ENCODE measurements at regions of chr21 and their contacts with region 1.

Region 1: DNA sequence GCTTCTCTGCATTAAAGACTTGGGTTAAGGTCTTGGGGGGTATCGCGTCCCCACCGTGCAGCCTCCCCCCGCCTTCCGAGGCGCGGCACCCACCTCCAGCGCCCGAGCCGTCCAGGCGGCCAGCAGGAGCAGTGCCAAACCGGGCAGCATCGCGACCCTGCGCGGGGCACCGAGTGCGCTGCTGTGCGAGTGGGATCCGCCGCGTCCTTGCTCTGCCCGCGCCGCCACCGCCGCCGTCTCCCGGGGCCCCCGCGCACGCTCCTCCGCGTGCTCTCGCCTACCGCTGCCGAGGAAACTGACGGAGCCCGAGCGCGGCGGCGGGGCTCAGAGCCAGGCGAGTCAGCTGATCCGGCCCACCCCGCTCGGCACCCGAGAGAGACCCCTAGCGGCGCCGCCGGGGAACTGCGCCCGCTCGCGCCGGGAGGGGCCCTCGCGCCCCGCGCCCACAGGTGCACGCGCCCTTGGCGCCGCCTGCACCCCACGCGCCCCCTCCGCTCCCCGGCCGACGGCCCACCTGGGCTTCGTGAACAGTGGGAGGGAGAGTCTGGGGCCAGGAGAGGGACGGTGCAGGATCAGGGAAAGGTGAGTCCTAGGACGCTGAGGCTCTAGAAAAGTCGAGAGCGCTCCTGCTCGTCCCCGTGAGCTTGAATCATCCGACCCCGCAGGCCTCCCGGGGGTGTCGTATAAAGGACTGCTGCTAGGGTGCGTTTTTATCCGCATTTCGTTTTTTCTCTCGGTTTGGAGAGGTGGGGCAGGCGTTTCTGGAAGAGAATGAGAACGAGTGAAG is at the start of gene APP:
- DNase-seq: peak; percentile 83
- ATAC-seq: peak; percentile 41
- H3K4me3 ChIP-seq: peak within 1 kb of the TSS; percentile 82
- H3K27ac ChIP-seq: peak within 1 kb of the TSS; percentile 59
- H3K4me1 ChIP-seq: peaks cover 36% of the 10 kb centered on the region
- H3K27me3 ChIP-seq: no peaks in the 10 kb centered on the region
- CTCF ChIP-seq: peak; percentile 86
- total RNA-seq, gene APP: 266 and 329 TPM in 2 replicates

Region 2: GRCh38 chr21:25881525-25882376 is 288.9 kb before region 1 on chr21:
- CTCF ChIA-PET with region 1: no interaction called
- POLR2A ChIA-PET with region 1: no interaction called
- intact Hi-C with region 1: loop called (anchors 5 kb)
- DNase-seq: peak; percentile 73
- ATAC-seq: peak; percentile 37
- H3K4me3 ChIP-seq: no peak overlapping the region
- H3K27ac ChIP-seq: no peak overlapping the region
- H3K4me1 ChIP-seq: peaks cover 34% of the 10 kb centered on the region
- H3K27me3 ChIP-seq: no peaks in the 10 kb centered on the region
- CTCF ChIP-seq: peak; percentile 98

Region 3: DNA sequence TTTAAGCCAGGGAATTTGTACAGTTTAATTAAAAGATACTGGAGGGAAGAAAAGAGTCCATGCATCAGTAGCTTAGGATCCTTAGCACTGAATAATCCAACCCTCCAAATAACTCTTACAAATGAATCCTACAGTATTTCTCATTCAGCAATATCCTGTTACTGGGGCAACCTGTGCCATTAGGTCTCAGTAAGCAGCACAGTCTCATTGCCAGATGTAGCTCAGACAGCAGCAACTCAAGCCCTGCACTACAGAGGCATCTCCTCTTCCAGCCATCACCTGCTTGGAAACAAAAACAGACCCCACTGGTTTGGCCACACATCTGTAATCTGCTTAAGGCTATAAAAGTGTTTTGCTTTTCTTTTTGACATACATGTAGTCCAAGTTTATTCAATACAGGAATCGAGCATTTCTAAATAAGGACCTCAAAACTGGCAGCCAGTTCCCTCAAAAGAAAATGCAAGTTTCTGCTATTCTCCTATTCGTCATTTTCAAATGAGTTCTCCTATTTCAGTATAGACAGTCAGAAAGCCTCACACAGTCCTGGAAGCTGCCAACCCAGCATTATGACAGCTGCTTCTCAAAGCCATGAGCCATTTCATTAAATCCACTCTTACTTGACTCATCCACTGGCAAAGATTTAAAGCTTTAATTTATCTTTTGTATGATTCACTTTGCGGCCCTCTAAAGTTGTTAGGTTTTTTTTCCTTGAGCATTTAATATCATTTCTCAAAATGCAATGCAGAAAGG is 129.1 kb before region 1 on chr21:
- CTCF ChIA-PET with region 1: interaction called, 3 read pairs
- POLR2A ChIA-PET with region 1: no interaction called
- intact Hi-C with region 1: loop called (anchors 2 kb)
- DNase-seq: peak; percentile 87
- ATAC-seq: peak; percentile 96
- H3K4me3 ChIP-seq: no peak overlapping the region
- H3K27ac ChIP-seq: peak overlapping the region; percentile 49
- H3K4me1 ChIP-seq: peaks cover 18% of the 10 kb centered on the region
- H3K27me3 ChIP-seq: no peaks in the 10 kb centered on the region
- CTCF ChIP-seq: no peak

Region 4: DNA sequence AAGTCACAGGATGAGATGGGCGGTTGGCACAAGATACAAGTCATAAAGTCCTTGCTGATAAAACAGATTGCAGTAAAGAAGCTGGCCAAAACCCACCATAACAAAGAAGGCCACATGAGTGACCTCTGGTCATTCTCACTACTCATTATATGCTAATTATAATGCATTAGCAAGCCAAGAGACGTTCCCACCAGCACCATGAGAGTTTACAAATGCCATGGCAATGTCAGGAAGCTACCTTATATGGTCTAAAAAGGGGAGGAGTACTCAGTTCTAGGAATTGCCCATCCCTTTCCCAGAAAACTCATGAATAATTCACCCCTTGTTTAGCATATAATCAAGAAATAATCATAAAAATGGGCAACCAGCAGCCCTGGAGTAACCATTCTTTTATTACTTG is 74.8 kb after region 1 on chr21:
- CTCF ChIA-PET with region 1: no interaction called
- POLR2A ChIA-PET with region 1: no interaction called
- intact Hi-C with region 1: no loop called
- DNase-seq: no peak
- ATAC-seq: no peak
- H3K4me3 ChIP-seq: no peak overlapping the region
- H3K27ac ChIP-seq: no peak overlapping the region
- H3K4me1 ChIP-seq: no peaks in the 10 kb centered on the region
- H3K27me3 ChIP-seq: no peaks in the 10 kb centered on the region
- CTCF ChIP-seq: no peak

Region 5: GRCh38 chr21:26389971-26390641 is 219.4 kb after region 1 on chr21:
- CTCF ChIA-PET with region 1: no interaction called
- POLR2A ChIA-PET with region 1: interaction called, 4 read pairs
- intact Hi-C with region 1: loop called (anchors 1 kb)
- DNase-seq: peak; percentile 96
- ATAC-seq: peak; percentile 74
- H3K4me3 ChIP-seq: peak overlapping the region; percentile 29; the same call in 1 of the 2 replicates
- H3K27ac ChIP-seq: peak overlapping the region; percentile 95
- H3K4me1 ChIP-seq: peaks cover 40% of the 10 kb centered on the region
- H3K27me3 ChIP-seq: no peaks in the 10 kb centered on the region
- CTCF ChIP-seq: no peak

Region 6: DNA sequence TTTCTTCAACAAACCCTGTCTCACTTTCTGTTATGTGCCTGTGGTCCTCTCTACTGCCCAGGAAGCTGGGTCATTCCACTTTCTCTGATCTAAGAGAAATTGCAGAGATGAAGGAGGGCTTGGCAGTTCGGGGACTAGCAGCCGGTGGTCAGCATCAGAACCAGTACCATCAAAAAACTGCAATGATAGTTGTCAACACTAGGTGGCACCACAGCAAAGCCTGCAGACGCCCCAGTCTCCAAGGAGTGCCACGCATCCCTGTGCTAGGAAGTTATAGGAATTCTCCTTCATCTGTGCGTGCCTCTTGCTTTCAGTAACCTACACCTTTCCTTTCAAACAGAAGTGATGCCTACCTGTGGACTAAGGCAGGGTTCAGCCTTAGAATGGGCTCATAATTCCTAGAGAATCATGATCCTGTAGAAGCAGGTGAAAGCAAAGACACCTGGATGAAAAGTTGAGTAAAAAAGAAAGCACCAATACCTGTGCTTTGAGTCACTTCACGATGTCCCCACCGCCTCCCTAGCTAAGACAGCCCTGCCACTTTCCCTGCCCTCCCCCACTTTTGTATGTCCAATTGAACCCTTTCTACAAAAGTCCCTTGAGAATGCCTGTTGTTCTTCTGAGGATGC is 545.3 kb after region 1 on chr21:
- CTCF ChIA-PET with region 1: interaction called, 5 read pairs
- POLR2A ChIA-PET with region 1: no interaction called
- intact Hi-C with region 1: loop called (anchors 1 kb)
- DNase-seq: peak; percentile 80
- ATAC-seq: peak; percentile 82
- H3K4me3 ChIP-seq: peak overlapping the region; percentile 51
- H3K27ac ChIP-seq: no peak overlapping the region
- H3K4me1 ChIP-seq: peaks cover 13% of the 10 kb centered on the region; the same call in 1 of the 2 replicates
- H3K27me3 ChIP-seq: no peaks in the 10 kb centered on the region
- CTCF ChIP-seq: peak; percentile 90

Measured in PC-3 (cell line).